Gastrocnemius medialis (tissue), 4 donors: ENCODE measurements at regions of chr10 and their contacts with region 1.

Region 1: DNA sequence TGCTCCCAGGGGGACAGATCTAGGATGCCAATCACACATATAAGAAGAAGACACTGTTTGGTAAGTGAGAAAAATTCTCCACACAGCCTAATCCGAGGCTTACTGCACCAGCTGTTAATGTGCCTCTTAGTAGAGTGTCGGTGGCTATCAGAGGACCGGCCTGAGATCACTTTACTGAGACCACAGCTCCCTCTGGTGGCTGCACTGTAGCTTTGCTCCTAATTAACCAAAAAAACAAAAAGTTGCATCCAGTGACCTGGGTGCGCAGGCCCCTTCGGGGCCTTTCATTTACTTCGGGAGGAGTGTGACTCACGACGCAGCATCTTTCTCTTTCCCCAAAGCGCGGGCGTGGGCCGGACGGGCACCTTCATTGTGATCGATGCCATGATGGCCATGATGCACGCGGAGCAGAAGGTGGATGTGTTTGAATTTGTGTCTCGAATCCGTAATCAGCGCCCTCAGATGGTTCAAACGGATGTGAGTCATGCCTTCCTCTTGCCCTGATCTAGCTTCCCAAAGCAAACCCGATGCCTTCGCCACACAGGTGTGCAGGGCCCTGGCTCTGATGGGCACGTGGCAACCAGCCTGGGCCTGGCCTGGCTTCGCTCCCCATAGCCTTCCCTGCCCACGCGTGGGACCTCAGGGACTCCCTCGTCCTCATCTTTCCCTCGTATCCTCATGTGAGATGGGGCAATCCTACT is 56.7 kb downstream of the MKI67 start:
- DNase-seq: peak; percentile 36 to 54
- ATAC-seq: peak; percentile 64 to 72
- H3K4me3 ChIP-seq: no peak overlapping the region
- H3K27ac ChIP-seq: no peak overlapping the region
- H3K4me1 ChIP-seq: no peaks in the 10 kb centered on the region
- H3K27me3 ChIP-seq: no peaks in the 10 kb centered on the region
- CTCF ChIP-seq: peak; percentile 50 to 85 (median 70)
- POLR2A ChIP-seq: no peak

Region 2: GRCh38 chr10:127679642-127680255 is 389.8 kb before region 1 on chr10:
- in situ Hi-C with region 1: no loop called
- intact Hi-C with region 1: no loop called
- DNase-seq: no peak
- ATAC-seq: no peak
- H3K4me3 ChIP-seq: no peak overlapping the region
- H3K27ac ChIP-seq: no peak overlapping the region
- H3K4me1 ChIP-seq: no peaks in the 10 kb centered on the region
- H3K27me3 ChIP-seq: no peaks in the 10 kb centered on the region
- CTCF ChIP-seq: no peak
- POLR2A ChIP-seq: no peak

Region 3: GRCh38 chr10:127906548-127907377 is 162.7 kb before region 1 on chr10 and contains the start of gene PTPRE:
- in situ Hi-C with region 1: no loop called
- intact Hi-C with region 1: loop called (anchors 1 kb)
- DNase-seq: no peak
- ATAC-seq: peak; percentile 84 to 86
- H3K4me3 ChIP-seq: peak within 1 kb of the TSS; percentile 53 to 72 (median 60)
- H3K27ac ChIP-seq: peak within 1 kb of the TSS; percentile 46 to 68 (median 62)
- H3K4me1 ChIP-seq: peaks cover 6 to 7% of the 10 kb centered on the region in 2 donors
- H3K27me3 ChIP-seq: peaks cover 4 to 8% (median 6%) of the 10 kb centered on the region in 3 donors
- CTCF ChIP-seq: peak; percentile 61 to 98 (median 93)
- POLR2A ChIP-seq: peak in 1 of 2 donors; percentile 32
- total RNA-seq, gene PTPRE: 0.97 to 2.2 (median 1.6) TPM

Region 4: GRCh38 chr10:128011175-128011979 is 58.1 kb before region 1 on chr10:
- in situ Hi-C with region 1: no loop called
- intact Hi-C with region 1: loop called (anchors 1 kb)
- DNase-seq: peak; percentile 47 to 62
- ATAC-seq: peak; percentile 85 to 90
- H3K4me3 ChIP-seq: no peak overlapping the region
- H3K27ac ChIP-seq: no peak overlapping the region
- H3K4me1 ChIP-seq: peaks cover 0 to 3% of the 10 kb centered on the region in 2 donors
- H3K27me3 ChIP-seq: no peaks in the 10 kb centered on the region
- CTCF ChIP-seq: peak; percentile 85 to 99 (median 95)
- POLR2A ChIP-seq: no peak

Region 5: DNA sequence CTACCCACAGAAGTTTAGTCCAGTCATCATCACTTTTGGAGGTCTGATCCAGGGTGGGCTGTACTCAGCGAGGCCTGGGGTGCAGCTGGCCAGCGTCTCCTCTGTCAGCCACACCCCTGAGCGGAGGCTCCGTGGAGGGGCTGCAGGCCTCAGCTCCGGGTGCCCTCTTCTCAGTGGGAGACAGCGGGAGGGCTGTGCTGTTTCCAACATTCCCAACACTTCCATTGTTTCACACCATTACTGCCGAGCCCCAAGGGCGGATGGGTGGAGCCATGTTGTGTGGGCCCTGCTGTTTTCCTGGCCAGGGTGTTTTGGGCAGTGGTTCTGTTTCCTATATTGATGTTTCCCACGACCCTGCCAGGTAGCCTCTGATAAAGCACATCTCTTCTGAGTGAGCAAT is 38.3 kb before region 1 on chr10:
- in situ Hi-C with region 1: no loop called
- intact Hi-C with region 1: loop called (anchors 5 kb)
- DNase-seq: no peak
- ATAC-seq: no peak
- H3K4me3 ChIP-seq: no peak overlapping the region
- H3K27ac ChIP-seq: no peak overlapping the region
- H3K4me1 ChIP-seq: no peaks in the 10 kb centered on the region
- H3K27me3 ChIP-seq: no peaks in the 10 kb centered on the region
- CTCF ChIP-seq: no peak
- POLR2A ChIP-seq: no peak

Region 6: DNA sequence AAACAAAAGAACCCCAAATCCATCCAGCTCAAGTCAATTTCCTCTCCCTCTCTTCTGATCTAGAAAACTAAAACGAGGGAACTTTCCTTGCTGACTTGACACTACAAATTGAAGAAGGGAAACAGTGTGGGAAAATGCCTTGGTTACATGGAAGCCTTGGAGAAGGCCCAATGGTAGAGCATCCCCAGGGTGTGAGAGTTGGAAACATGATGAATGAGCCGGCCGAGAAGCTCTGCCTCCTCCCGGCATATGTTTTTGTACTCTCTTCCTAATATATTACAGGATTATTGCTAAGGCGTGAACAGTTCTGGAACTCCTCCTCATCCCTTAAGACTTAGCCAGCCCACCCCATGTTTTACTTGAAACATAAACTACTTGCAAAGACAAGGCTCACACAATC is 779.3 kb after region 1 on chr10:
- in situ Hi-C with region 1: no loop called
- intact Hi-C with region 1: no loop called
- DNase-seq: no peak
- ATAC-seq: no peak
- H3K4me3 ChIP-seq: no peak overlapping the region
- H3K27ac ChIP-seq: peak overlapping the region in 1 of 4 donors; percentile 4
- H3K4me1 ChIP-seq: peaks cover 0 to 20% of the 10 kb centered on the region in 2 donors
- H3K27me3 ChIP-seq: no peaks in the 10 kb centered on the region
- CTCF ChIP-seq: no peak
- POLR2A ChIP-seq: no peak